ENCODE measurements at regions of chr4 and their contacts with region 1.

Region 1: GRCh38 chr4:140743194-140743931 is 12.8 kb downstream of the TBC1D9 start:
- DNase-seq: no peak
- ATAC-seq: peak; percentile 77
- H3K4me3 Mint-ChIP-seq: peak overlapping the region; percentile 80
- H3K27ac Mint-ChIP-seq: peak overlapping the region; percentile 97
- H3K4me1 Mint-ChIP-seq: peaks cover 88% of the 10 kb centered on the region
- H3K27me3 Mint-ChIP-seq: no peaks in the 10 kb centered on the region
- CTCF ChIP-seq: no peak

Region 2: DNA sequence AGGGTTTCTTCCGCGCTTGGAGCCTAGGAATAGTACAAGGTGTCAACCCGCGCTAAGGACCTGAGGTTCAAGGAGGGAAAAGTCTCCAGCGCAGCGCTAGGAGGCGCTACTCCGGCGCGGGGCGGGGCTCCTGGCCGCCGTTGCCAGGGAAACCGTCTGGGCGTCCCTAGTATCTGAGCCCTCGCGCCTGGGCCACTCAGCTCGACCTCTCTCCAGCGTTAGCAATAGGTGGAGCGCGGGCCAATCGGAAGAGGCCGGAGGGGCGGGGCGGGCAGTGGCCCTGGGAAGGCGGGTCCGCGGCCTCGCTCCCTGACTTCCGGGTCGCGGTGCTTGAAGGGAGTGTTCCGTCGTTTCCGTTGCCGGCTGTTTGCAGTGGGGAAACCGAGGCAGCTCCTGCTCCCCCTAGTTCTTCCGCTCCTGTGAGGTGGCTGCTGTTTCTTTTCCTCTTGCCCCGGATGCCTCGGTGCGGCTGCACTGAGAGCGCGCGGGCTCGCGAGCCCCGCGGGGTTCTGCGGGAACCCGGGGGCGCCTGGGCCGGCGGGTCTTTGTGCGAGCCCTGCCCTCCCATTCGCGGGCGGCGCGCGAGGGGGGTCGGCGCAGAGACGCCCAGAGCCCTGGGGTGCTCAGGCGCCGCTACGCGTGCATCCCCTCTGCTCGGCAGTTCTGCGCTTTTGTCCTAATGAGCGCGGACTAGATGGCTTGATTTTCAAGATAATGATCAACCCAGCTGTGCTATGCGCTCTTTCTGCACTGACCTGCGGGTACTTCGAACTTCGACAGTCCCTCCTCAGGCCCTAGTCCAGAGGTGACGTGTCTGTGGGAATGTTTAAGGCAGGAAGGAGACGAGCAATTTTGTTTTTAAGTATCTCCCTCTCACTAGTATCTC is 219.3 kb before region 1 on chr4 and contains the start of gene ELMOD2:
- CTCF ChIA-PET with region 1: no interaction called
- POLR2A ChIA-PET with region 1: no interaction called
- intact Hi-C with region 1: loop called (anchors 1 kb)
- DNase-seq: peak; percentile 94
- ATAC-seq: peak; percentile 99
- H3K4me3 Mint-ChIP-seq: peak within 1 kb of the TSS; percentile 90
- H3K27ac Mint-ChIP-seq: peak within 1 kb of the TSS; percentile 84
- H3K4me1 Mint-ChIP-seq: peaks cover 14% of the 10 kb centered on the region
- H3K27me3 Mint-ChIP-seq: no peaks in the 10 kb centered on the region
- CTCF ChIP-seq: peak; percentile 72
- total RNA-seq, gene ELMOD2: 20.4 and 20.8 TPM in 2 replicates

Region 3: DNA sequence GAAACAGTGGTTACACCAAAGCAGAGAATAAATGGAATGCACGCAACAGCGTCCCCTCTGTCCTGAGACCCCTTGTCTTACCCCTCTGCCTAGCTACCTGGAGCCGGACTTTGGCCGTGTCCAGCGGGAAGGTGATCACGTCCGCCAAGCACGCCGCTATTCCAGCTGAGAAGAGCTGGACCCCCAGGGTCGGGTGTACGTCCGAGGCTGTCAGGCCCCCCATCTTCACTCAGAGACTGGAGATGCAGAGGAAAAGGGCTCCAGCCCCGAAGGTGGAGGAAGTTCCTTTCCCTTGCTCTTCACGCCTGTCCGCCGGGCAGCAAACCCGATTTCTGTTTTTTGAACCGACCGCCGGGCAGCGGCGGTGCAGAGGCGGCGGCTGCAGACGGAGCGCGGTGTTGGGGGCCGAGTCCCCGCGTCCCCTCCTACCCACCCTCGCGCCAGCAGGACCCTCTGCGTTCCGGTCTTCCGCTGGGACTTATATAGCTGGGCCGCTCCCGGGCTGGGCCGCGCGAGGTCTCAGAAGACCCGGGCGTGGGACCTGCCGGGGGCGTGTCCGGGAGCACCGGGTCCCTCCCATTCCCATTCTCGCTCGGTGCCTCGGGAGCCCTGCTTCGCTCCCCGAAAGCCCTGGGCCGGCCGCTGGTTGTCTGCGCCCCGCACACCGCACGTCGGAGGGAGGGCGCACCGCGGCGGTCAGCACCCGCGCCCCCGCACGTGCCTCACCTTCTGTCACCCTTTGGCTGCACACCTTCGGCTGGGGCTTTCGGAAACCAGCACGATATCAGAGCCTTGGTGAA is 174.7 kb before region 1 on chr4 and contains the start of gene UCP1:
- CTCF ChIA-PET with region 1: no interaction called
- POLR2A ChIA-PET with region 1: no interaction called
- intact Hi-C with region 1: no loop called
- DNase-seq: peak; percentile 24
- ATAC-seq: peak; percentile 52
- H3K4me3 Mint-ChIP-seq: peak within 1 kb of the TSS; percentile 81
- H3K27ac Mint-ChIP-seq: no peak within 1 kb of the TSS
- H3K4me1 Mint-ChIP-seq: peaks cover 23% of the 10 kb centered on the region
- H3K27me3 Mint-ChIP-seq: peaks cover 38% of the 10 kb centered on the region
- CTCF ChIP-seq: no peak
- total RNA-seq, gene UCP1: not detected in 2 replicates

Region 4: GRCh38 chr4:140704964-140705363 is 38.4 kb before region 1 on chr4:
- CTCF ChIA-PET with region 1: no interaction called
- POLR2A ChIA-PET with region 1: no interaction called
- intact Hi-C with region 1: loop called (anchors 5 kb)
- DNase-seq: no peak
- ATAC-seq: peak; percentile 58
- H3K4me3 Mint-ChIP-seq: peak overlapping the region; percentile 9
- H3K27ac Mint-ChIP-seq: peak overlapping the region; percentile 79
- H3K4me1 Mint-ChIP-seq: peaks cover 59% of the 10 kb centered on the region
- H3K27me3 Mint-ChIP-seq: no peaks in the 10 kb centered on the region
- CTCF ChIP-seq: no peak

Region 5: GRCh38 chr4:140726776-140727500 is 16.4 kb before region 1 on chr4:
- CTCF ChIA-PET with region 1: interaction called, 4 read pairs
- POLR2A ChIA-PET with region 1: interaction called, 53 read pairs
- intact Hi-C with region 1: loop called (anchors 1 kb)
- DNase-seq: no peak
- ATAC-seq: peak; percentile 32
- H3K4me3 Mint-ChIP-seq: no peak overlapping the region
- H3K27ac Mint-ChIP-seq: peak overlapping the region; percentile 81
- H3K4me1 Mint-ChIP-seq: peaks cover 78% of the 10 kb centered on the region
- H3K27me3 Mint-ChIP-seq: no peaks in the 10 kb centered on the region
- CTCF ChIP-seq: no peak

Region 6: GRCh38 chr4:140756319-140757231 is 13.2 kb after region 1 on chr4 and contains the start of gene TBC1D9:
- CTCF ChIA-PET with region 1: interaction called, 12 read pairs
- POLR2A ChIA-PET with region 1: interaction called, 70 read pairs
- intact Hi-C with region 1: loop called (anchors 1 kb)
- DNase-seq: peak; percentile 70
- ATAC-seq: peak; percentile 48
- H3K4me3 Mint-ChIP-seq: peak within 1 kb of the TSS; percentile 89
- H3K27ac Mint-ChIP-seq: peak within 1 kb of the TSS; percentile 94
- H3K4me1 Mint-ChIP-seq: peaks cover 62% of the 10 kb centered on the region
- H3K27me3 Mint-ChIP-seq: no peaks in the 10 kb centered on the region
- CTCF ChIP-seq: no peak
- total RNA-seq, gene TBC1D9: 37.9 and 46.0 TPM in 2 replicates

Region 7: GRCh38 chr4:140807491-140808252 is 64.3 kb after region 1 on chr4:
- CTCF ChIA-PET with region 1: interaction called, 8 read pairs
- POLR2A ChIA-PET with region 1: interaction called, 9 read pairs
- intact Hi-C with region 1: loop called (anchors 1 kb)
- DNase-seq: no peak
- ATAC-seq: peak; percentile 78
- H3K4me3 Mint-ChIP-seq: peak overlapping the region; percentile 72
- H3K27ac Mint-ChIP-seq: peak overlapping the region; percentile 93
- H3K4me1 Mint-ChIP-seq: peaks cover 89% of the 10 kb centered on the region
- H3K27me3 Mint-ChIP-seq: no peaks in the 10 kb centered on the region
- CTCF ChIP-seq: no peak

Region 8: DNA sequence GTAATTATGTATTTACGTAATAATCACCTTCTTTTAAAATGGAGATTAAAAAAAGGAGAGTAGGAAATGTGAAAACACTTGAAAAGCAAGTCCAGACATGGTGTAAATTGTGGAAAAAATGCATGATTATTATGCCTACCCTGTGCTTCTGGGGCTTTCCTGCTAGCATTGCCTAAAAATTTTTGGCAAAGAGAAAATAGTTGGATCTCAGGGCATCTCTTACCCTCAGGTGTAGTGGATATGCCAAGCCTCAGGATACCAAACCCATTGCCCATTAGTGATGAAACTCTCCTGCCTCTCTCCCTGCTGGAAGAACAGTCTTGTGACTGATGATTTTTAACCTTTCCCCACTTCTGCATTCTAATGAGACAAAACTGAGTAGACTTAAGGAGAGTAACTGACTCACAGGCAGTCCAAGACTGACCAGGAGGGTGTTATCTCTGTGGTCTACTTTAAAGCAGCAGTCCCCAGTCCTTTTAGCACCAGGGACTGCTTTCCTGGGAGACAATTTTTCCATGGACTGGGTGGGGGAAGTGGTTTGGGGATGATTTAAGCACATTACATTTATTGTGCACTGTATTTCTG is 652.0 kb after region 1 on chr4:
- CTCF ChIA-PET with region 1: no interaction called
- POLR2A ChIA-PET with region 1: no interaction called
- intact Hi-C with region 1: no loop called
- DNase-seq: no peak
- ATAC-seq: no peak
- H3K4me3 Mint-ChIP-seq: no peak overlapping the region
- H3K27ac Mint-ChIP-seq: no peak overlapping the region
- H3K4me1 Mint-ChIP-seq: no peaks in the 10 kb centered on the region
- H3K27me3 Mint-ChIP-seq: no peaks in the 10 kb centered on the region
- CTCF ChIP-seq: no peak

Region 9: DNA sequence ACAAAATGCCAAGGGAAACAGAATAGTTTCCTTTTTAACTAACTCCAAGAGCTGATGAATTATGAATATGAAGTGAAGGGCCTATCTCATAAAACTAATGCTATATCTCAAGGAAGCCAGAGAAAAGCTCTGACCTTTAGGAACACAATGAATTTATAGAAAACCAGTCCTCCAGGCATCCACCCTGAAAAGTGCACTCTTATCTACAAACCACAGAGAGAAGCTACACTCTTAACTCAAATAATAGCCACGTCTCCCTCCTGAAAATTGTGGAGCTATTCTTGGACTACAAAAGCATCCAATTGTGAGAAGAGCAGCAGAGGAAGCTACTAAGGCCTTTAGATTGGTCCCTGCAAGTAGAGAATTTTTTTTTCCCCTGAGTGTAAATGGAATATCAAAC is 1146.9 kb after region 1 on chr4:
- CTCF ChIA-PET with region 1: no interaction called
- POLR2A ChIA-PET with region 1: no interaction called
- intact Hi-C with region 1: no loop called
- DNase-seq: no peak
- ATAC-seq: no peak
- H3K4me3 Mint-ChIP-seq: no peak overlapping the region
- H3K27ac Mint-ChIP-seq: no peak overlapping the region
- H3K4me1 Mint-ChIP-seq: no peaks in the 10 kb centered on the region
- H3K27me3 Mint-ChIP-seq: no peaks in the 10 kb centered on the region
- CTCF ChIP-seq: no peak

Region 10: DNA sequence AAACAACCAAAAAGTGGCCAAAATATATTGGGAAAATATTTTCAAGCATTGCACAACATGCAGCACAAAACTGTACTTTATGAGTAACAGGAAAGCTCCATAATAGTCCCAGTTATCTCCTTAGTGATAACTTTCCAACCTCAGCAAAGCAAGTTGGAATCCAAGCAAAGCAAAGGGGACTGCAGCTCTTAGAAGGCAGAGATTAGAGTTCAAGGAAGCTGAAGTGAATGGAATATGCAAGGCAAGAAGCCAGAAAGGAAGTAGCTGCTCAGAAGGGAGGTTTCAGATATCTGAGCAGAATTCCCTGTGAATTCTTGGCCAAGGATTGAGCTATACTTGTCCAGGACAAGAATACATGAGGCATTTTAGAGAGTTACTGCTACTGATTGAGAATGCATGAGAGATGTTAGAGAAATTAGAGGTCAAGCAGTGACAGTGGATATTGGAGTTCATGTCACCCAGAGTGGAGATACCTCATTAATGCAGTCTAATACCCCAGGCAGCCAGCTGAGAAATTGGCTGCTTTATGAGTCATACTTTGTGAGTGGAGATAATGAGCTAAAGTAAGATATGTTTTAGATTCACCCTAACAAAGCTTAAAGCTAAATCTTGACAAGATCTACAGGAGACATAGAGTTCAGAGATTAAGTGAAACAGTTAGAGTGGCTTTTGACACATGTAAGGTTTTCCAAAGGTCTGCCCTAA is 1999.9 kb after region 1 on chr4:
- CTCF ChIA-PET with region 1: no interaction called
- POLR2A ChIA-PET with region 1: no interaction called
- intact Hi-C with region 1: no loop called
- DNase-seq: no peak
- ATAC-seq: no peak
- H3K4me3 Mint-ChIP-seq: no peak overlapping the region
- H3K27ac Mint-ChIP-seq: no peak overlapping the region
- H3K4me1 Mint-ChIP-seq: no peaks in the 10 kb centered on the region
- H3K27me3 Mint-ChIP-seq: no peaks in the 10 kb centered on the region
- CTCF ChIP-seq: no peak